Activated CD4-positive, alpha-beta memory T cell treated with anti-CD3 and anti-CD28 coated beads for 36 hours (primary cell): ENCODE measurements at regions of chr15 and their contacts with region 1.

Region 1: DNA sequence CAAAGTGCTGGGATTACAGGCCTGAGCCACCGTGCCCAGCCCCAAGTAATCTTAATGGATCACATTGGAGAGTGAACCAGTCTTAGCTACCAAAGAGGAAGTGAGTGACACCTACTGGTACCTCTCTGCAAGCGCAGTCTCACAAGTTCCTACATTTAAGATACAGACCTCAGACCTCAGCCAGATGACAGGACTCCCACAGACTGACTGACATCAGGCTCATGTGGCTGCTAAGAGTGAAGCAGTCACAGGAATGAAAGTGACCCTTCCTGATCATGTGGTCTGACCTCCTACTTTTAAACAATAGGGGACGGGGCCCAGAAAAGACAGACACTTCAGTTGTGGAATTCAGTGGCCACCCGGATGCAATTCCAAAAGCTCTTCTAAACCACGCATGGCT is 36.3 kb upstream of the GNB5 start:
- DNase-seq: peak; percentile 81
- H3K4me3 Mint-ChIP-seq: no peak overlapping the region
- H3K27ac Mint-ChIP-seq: no peak overlapping the region
- H3K4me1 Mint-ChIP-seq: peaks cover 18% of the 10 kb centered on the region
- H3K27me3 Mint-ChIP-seq: no peaks in the 10 kb centered on the region

Region 2: DNA sequence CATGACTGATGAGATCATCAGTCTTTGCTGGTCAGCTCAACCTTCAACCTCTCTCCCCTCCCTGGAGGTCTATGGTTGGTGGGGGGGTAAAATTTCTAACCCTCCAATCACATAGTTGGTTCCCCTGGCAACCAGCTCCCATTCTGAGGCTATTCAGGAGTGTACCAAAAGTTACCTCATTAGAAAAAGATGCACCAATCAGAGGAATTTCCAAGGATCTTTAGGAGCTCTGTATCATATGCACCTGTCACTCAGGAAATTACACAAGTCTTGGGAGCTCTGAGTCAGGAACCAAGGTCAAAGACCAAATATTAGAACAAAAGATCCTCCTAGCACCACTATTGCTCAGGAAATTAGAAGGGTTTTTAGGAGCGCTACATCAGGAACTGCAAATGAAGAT is 234.5 kb before region 1 on chr15:
- CTCF ChIA-PET with region 1: no interaction called
- POLR2A ChIA-PET with region 1: no interaction called
- intact Hi-C with region 1: no loop called
- DNase-seq: no peak
- H3K4me3 Mint-ChIP-seq: no peak overlapping the region
- H3K27ac Mint-ChIP-seq: no peak overlapping the region
- H3K4me1 Mint-ChIP-seq: no peaks in the 10 kb centered on the region
- H3K27me3 Mint-ChIP-seq: no peaks in the 10 kb centered on the region

Region 3: DNA sequence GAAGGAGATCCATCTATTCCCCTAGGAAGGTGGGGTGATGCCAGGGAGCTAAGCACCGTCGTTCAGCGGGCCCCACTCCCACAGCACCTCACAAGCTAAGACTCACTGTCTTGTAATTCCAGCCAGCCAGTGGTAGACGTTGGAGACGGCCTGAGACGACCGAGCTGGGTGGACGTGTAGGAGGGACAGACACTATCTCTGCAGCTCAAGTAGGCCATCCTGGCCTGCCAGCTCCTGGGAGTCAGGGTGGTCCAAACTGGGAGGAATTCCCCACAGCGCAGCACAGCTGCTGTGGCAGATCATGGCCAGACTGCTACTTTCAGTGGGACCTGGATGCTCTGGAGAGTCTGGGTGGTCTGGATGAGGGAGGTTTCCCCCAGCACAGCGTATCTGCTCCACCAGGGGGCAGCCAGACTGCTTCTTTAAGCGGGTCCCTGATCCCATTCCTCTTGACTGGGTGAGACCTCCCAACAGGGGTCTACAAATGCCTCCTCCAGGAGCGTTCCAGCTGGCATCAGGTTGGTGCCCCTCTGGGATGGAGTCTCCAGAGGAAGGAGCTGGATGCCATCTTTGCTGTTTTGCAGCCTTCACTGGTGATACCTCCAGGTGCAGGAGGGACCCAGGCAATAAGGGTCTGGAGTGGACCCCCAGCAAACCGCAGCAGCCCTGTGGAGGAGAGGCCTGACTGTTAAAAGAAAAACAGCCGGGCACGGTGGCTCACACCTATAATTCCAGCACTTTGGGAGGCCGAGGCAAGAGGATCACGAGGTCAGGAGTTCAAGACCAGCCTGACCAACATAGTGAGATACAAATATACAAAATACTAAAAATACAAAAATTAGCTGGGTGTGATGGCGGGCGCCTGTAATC is 63.9 kb before region 1 on chr15:
- CTCF ChIA-PET with region 1: interaction called, 16 read pairs
- POLR2A ChIA-PET with region 1: no interaction called
- intact Hi-C with region 1: no loop called
- DNase-seq: no peak
- H3K4me3 Mint-ChIP-seq: no peak overlapping the region
- H3K27ac Mint-ChIP-seq: no peak overlapping the region
- H3K4me1 Mint-ChIP-seq: peaks cover 31% of the 10 kb centered on the region
- H3K27me3 Mint-ChIP-seq: no peaks in the 10 kb centered on the region

Region 4: GRCh38 chr15:52179278-52180195 is 47.9 kb before region 1 on chr15:
- CTCF ChIA-PET with region 1: interaction called, 21 read pairs
- POLR2A ChIA-PET with region 1: interaction called, 3 read pairs
- intact Hi-C with region 1: loop called (anchors 1 kb)
- DNase-seq: peak; percentile 93
- H3K4me3 Mint-ChIP-seq: peak overlapping the region; percentile 94
- H3K27ac Mint-ChIP-seq: peak overlapping the region; percentile 94
- H3K4me1 Mint-ChIP-seq: peaks cover 28% of the 10 kb centered on the region
- H3K27me3 Mint-ChIP-seq: no peaks in the 10 kb centered on the region

Region 5: DNA sequence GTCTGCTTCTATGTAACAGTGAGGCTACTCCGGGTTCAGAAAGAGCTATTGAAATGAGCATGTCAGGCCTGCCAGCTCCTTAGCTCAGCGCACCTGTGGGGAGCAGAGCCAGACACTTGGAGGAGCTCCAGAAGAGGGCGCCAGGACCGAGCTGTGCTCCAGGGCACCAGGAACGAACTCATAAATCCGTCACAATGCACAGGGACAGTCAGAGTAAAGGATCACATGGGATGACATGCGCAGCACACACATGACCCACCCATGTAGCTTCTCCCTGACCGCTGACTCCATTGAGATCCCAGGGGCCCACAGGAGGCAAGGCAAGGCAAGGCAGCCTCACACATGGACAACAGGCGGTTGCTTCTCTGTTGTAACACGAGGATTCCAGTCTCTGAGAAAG is 10.3 kb before region 1 on chr15:
- CTCF ChIA-PET with region 1: interaction called, 17 read pairs
- POLR2A ChIA-PET with region 1: no interaction called
- intact Hi-C with region 1: no loop called
- DNase-seq: peak; percentile 55
- H3K4me3 Mint-ChIP-seq: no peak overlapping the region
- H3K27ac Mint-ChIP-seq: no peak overlapping the region
- H3K4me1 Mint-ChIP-seq: peaks cover 15% of the 10 kb centered on the region
- H3K27me3 Mint-ChIP-seq: no peaks in the 10 kb centered on the region